Heart right ventricle (tissue), 16 donors: ENCODE measurements at regions of chr17 and their contacts with region 1.

Region 1: GRCh38 chr17:11369575-11369974 is 128.6 kb downstream of the SHISA6 start:
- DNase-seq: no peak
- ATAC-seq: peak in 2 of 8 donors; percentile 16 to 27
- H3K4me3 ChIP-seq: no peak overlapping the region
- H3K27ac ChIP-seq: no peak overlapping the region
- H3K4me1 ChIP-seq: no peaks in the 10 kb centered on the region
- H3K27me3 ChIP-seq: peaks cover 0 to 27% (median 0%) of the 10 kb centered on the region in 7 donors
- CTCF ChIP-seq: no peak

Region 2: GRCh38 chr17:11421864-11422263 is 52.3 kb after region 1 on chr17:
- intact Hi-C with region 1: loop called in 1 of 10 experiments (anchors 10 kb)
- DNase-seq: no peak
- ATAC-seq: no peak
- H3K4me3 ChIP-seq: no peak overlapping the region
- H3K27ac ChIP-seq: no peak overlapping the region
- H3K4me1 ChIP-seq: no peaks in the 10 kb centered on the region
- H3K27me3 ChIP-seq: no peaks in the 10 kb centered on the region
- CTCF ChIP-seq: no peak

Region 3: GRCh38 chr17:11589716-11590115 is 220.1 kb after region 1 on chr17:
- intact Hi-C with region 1: no loop called
- DNase-seq: no peak
- ATAC-seq: no peak
- H3K4me3 ChIP-seq: no peak overlapping the region
- H3K27ac ChIP-seq: no peak overlapping the region
- H3K4me1 ChIP-seq: no peaks in the 10 kb centered on the region
- H3K27me3 ChIP-seq: peaks cover 0 to 19% (median 2%) of the 10 kb centered on the region in 7 donors
- CTCF ChIP-seq: no peak